B cell (primary cell): ENCODE measurements at regions of chr6 and their contacts with region 1.

Region 1: GRCh38 chr6:13336553-13336952 is 8.2 kb upstream of the TBC1D7 start:
- DNase-seq: peak; percentile 84
- ATAC-seq: peak; percentile 81
- H3K4me3 ChIP-seq: no peak overlapping the region
- H3K4me3 Mint-ChIP-seq: no peak overlapping the region
- H3K27ac ChIP-seq: no peak overlapping the region
- H3K27ac Mint-ChIP-seq: peak overlapping the region; percentile 5
- H3K4me1 ChIP-seq: peaks cover 40% of the 10 kb centered on the region in 2 donors
- H3K4me1 Mint-ChIP-seq: peaks cover 46% of the 10 kb centered on the region
- H3K27me3 ChIP-seq: no peaks in the 10 kb centered on the region
- H3K27me3 Mint-ChIP-seq: no peaks in the 10 kb centered on the region
- CTCF ChIP-seq: peak; percentile 90

Region 2: DNA sequence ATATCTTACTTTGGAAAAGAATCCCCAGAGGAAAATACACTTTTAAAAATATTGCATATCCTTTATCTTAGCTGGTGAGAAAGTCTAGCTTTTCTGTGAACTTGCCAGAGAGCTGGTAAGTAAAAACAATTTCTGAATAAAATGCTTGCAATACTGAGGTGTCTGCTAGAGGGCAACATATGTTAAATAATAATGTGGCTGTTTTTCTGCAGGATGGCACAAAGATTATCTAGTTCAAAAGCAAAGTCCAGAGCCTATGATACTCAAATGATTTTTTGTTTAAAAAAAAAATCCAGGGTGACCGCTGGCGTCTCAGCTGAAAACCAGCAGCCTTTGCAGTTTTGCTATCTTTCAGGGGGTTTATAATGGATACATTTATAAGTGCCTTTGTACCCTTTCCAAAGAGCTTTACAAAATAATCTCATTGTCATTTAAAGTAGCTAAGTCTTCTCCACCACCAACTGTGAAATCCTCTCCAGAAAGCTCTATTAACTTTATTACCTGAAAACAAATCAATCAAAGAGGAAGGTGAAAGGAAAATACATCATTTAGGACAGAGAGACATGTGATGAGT is 425.1 kb before region 1 on chr6:
- CTCF ChIA-PET with region 1: interaction called, 109 read pairs
- POLR2A ChIA-PET with region 1: no interaction called
- intact Hi-C with region 1: no loop called
- DNase-seq: peak; percentile 42
- ATAC-seq: no peak
- H3K4me3 ChIP-seq: no peak overlapping the region
- H3K4me3 Mint-ChIP-seq: no peak overlapping the region
- H3K27ac ChIP-seq: no peak overlapping the region
- H3K27ac Mint-ChIP-seq: no peak overlapping the region
- H3K4me1 ChIP-seq: peaks cover 0 to 5% of the 10 kb centered on the region in 2 donors
- H3K4me1 Mint-ChIP-seq: peaks cover 5% of the 10 kb centered on the region
- H3K27me3 ChIP-seq: no peaks in the 10 kb centered on the region
- H3K27me3 Mint-ChIP-seq: peaks cover 9% of the 10 kb centered on the region
- CTCF ChIP-seq: peak; percentile 60

Region 3: DNA sequence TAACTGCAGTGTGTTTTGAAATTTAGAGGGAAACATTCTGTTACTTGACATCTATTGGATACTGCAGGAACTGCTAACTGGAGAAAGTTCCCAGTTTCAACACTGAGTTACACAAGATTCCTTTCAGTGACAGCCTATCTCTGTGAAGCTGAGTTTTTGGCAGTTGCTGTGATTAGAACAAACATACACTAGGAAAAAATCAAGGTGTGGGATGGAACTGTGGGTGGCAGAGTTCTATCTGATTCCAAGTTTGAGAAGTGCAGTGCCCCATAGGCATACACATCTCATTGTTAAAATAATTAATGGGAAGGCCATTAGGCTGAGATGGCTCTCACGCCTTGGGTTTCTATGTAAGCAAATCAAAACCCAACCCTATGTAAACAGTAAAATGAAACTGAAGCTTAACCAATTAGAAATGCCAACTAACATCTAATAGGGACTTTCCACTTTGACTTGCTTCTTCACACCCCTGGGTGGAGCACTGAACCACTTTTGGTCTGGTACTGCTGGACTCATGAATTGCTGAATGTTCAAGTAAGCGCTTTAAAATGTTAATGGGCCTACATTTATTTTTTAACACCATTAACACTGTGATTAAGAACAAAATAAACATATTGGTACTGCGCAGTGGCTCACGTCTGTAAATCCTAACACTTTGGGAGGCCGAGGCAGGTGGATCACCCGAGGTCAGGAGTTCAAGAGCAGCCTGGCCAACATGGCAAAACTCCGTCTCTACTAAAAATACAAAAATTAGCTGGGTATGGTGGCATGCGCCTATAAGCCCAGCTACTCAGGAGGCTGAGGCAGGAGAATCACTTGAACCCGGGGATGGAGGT is 47.0 kb after region 1 on chr6:
- CTCF ChIA-PET with region 1: interaction called, 56 read pairs
- POLR2A ChIA-PET with region 1: no interaction called
- intact Hi-C with region 1: loop called (anchors 1 kb)
- DNase-seq: peak; percentile 83
- ATAC-seq: peak; percentile 96
- H3K4me3 ChIP-seq: no peak overlapping the region
- H3K4me3 Mint-ChIP-seq: peak overlapping the region; percentile 55
- H3K27ac ChIP-seq: peak overlapping the region; percentile 70 to 84
- H3K27ac Mint-ChIP-seq: peak overlapping the region; percentile 92
- H3K4me1 ChIP-seq: peaks cover 36 to 42% of the 10 kb centered on the region in 2 donors
- H3K4me1 Mint-ChIP-seq: peaks cover 73% of the 10 kb centered on the region
- H3K27me3 ChIP-seq: no peaks in the 10 kb centered on the region
- H3K27me3 Mint-ChIP-seq: no peaks in the 10 kb centered on the region
- CTCF ChIP-seq: peak; percentile 53

Region 4: GRCh38 chr6:13454286-13455221 is 118.0 kb after region 1 on chr6:
- CTCF ChIA-PET with region 1: interaction called, 11 read pairs
- POLR2A ChIA-PET with region 1: no interaction called
- intact Hi-C with region 1: no loop called
- DNase-seq: peak; percentile 75
- ATAC-seq: peak; percentile 77
- H3K4me3 ChIP-seq: peak overlapping the region in 3 of 5 experiments; percentile 7 to 26 (median 12)
- H3K4me3 Mint-ChIP-seq: peak overlapping the region; percentile 76
- H3K27ac ChIP-seq: peak overlapping the region; percentile 23 to 50
- H3K27ac Mint-ChIP-seq: peak overlapping the region; percentile 88
- H3K4me1 ChIP-seq: peaks cover 36 to 41% of the 10 kb centered on the region in 2 donors
- H3K4me1 Mint-ChIP-seq: peaks cover 56% of the 10 kb centered on the region
- H3K27me3 ChIP-seq: no peaks in the 10 kb centered on the region
- H3K27me3 Mint-ChIP-seq: no peaks in the 10 kb centered on the region
- CTCF ChIP-seq: peak; percentile 17

Region 5: GRCh38 chr6:13538084-13538483 is 201.5 kb after region 1 on chr6:
- CTCF ChIA-PET with region 1: interaction called, 53 read pairs
- POLR2A ChIA-PET with region 1: no interaction called
- intact Hi-C with region 1: loop called (anchors 1 kb)
- DNase-seq: peak; percentile 64
- ATAC-seq: peak; percentile 56
- H3K4me3 ChIP-seq: no peak overlapping the region
- H3K4me3 Mint-ChIP-seq: no peak overlapping the region
- H3K27ac ChIP-seq: no peak overlapping the region
- H3K27ac Mint-ChIP-seq: no peak overlapping the region
- H3K4me1 ChIP-seq: peaks cover 6 to 8% of the 10 kb centered on the region in 2 donors
- H3K4me1 Mint-ChIP-seq: peaks cover 17% of the 10 kb centered on the region
- H3K27me3 ChIP-seq: no peaks in the 10 kb centered on the region
- H3K27me3 Mint-ChIP-seq: no peaks in the 10 kb centered on the region
- CTCF ChIP-seq: peak; percentile 54